ENCODE measurements at regions of chr1 and their contacts with region 1.

Region 1: GRCh38 chr1:61887076-61887867 is 145.0 kb downstream of the PATJ start:
- DNase-seq: no peak
- ATAC-seq: no peak
- H3K4me3 ChIP-seq: no peak overlapping the region
- H3K27ac ChIP-seq: no peak overlapping the region
- H3K4me1 ChIP-seq: no peaks in the 10 kb centered on the region
- H3K27me3 ChIP-seq: no peaks in the 10 kb centered on the region
- CTCF ChIP-seq: no peak
- EP300 ChIP-seq: no peak
- POLR2A ChIP-seq: no peak
- RAD21 ChIP-seq: no peak

Region 2: DNA sequence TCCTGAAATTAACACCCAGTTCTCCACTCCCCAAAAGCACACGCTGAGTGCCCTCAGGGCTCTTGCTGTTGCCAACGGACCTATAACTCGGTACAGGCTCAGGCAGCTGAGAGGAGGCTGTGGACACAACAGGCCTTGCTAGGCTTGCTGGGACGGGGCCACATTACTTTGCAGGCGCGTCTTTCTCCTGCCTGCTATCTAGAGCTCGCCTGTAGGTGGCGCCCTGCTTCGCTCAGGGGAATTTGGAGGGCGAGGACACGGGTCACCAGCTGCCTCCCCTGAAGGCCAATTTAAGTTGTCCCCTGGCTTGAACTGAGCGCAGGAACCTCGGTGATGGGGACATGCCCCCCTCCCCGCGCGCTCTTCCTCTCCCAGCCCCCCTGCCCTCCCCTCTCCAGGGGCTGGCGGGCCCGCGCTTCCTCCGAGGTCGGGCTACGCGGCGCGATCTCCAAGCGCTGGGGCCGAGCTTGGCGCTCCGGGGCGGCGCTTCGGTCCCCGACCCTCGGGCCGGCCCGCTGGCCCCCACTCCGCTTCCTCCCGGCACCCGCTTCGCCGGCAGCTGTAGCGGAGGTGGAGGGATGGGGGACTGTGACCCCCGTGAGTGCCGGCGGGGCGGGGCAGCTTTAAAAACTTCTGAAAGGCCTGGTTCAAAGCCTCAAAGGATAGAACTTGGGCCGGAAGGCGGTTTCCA is 837.3 kb before region 1 on chr1:
- CTCF ChIA-PET with region 1: no interaction called
- POLR2A ChIA-PET with region 1: no interaction called
- in situ Hi-C with region 1: no loop called
- intact Hi-C with region 1: no loop called
- DNase-seq: peak; percentile 70
- ATAC-seq: peak; percentile 80
- H3K4me3 ChIP-seq: peak overlapping the region; percentile 67 to 80 (median 74)
- H3K27ac ChIP-seq: peak overlapping the region; percentile 47
- H3K4me1 ChIP-seq: peaks cover 27% of the 10 kb centered on the region
- H3K27me3 ChIP-seq: peaks cover 2 to 32% of the 10 kb centered on the region in 2 experiments; a peak in 4 of 5 replicates
- CTCF ChIP-seq: peak; percentile 97
- EP300 ChIP-seq: no peak
- POLR2A ChIP-seq: no peak
- RAD21 ChIP-seq: peak; percentile 84

Region 3: GRCh38 chr1:61914823-61915482 is 27.7 kb after region 1 on chr1:
- CTCF ChIA-PET with region 1: no interaction called
- POLR2A ChIA-PET with region 1: no interaction called
- in situ Hi-C with region 1: no loop called
- intact Hi-C with region 1: loop called (anchors 1 kb)
- DNase-seq: peak; percentile 96
- ATAC-seq: peak; percentile 98
- H3K4me3 ChIP-seq: peak overlapping the region in 1 of 3 experiments; percentile 14; a peak in 1 of 6 replicates
- H3K27ac ChIP-seq: peak overlapping the region; percentile 81
- H3K4me1 ChIP-seq: peaks cover 38% of the 10 kb centered on the region
- H3K27me3 ChIP-seq: no peaks in the 10 kb centered on the region; a peak in 1 of 5 replicates
- CTCF ChIP-seq: no peak
- EP300 ChIP-seq: peak in 1 of 2 experiments; percentile 87; a peak in 2 of 4 replicates
- POLR2A ChIP-seq: no peak
- RAD21 ChIP-seq: no peak

Measured in HepG2 (cell line).